ENCODE measurements at regions of chr1 and their contacts with region 1.

Region 1: DNA sequence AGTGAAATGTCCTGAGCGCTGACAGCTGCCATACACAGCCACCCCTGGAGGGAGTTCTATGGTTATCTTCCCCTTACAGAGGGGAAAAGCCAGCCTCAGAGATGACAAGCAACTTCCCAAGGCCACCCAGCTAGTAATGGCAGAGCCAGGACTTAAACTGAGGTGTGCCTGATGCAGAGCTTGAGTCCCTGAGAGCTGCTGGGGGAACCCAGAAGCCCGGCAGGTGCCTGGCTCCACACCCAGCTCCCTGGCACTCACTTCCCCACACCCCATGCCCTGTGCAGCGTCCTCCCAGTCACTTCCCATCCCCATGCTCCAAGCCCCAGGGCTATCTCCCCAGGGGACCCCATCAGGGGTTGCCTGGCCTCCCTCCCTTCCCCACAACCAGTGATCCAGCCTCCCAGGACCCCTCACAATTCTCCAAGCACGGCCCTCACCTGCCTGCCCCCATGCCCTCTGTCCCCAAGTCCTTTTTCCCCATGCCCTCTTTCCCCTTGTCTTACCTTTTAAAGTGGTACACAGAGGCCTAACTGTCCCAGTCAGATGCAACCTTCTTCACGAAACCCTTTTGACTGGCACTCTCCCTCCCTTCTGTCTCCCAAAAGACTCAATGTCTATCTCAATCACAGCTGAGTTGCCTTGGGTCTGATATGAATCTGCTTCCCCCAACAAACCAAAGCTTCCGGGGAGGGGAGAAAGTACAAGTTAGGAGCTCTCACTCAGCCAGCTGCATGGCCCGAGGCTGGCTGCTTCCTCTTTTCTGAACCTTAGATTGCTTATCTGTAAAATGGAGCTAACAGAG is 39.8 kb upstream of the LRP8 start:
- DNase-seq: peak; percentile 64
- ATAC-seq: peak; percentile 96
- H3K4me3 ChIP-seq: peak overlapping the region; percentile 66
- H3K27ac ChIP-seq: peak overlapping the region; percentile 53
- H3K4me1 ChIP-seq: peaks cover 8% of the 10 kb centered on the region
- H3K27me3 ChIP-seq: no peaks in the 10 kb centered on the region
- CTCF ChIP-seq: no peak
- EP300 ChIP-seq: no peak
- POLR2A ChIP-seq: peak; percentile 54; the same call in 1 of the 2 replicates
- RAD21 ChIP-seq: no peak

Region 2: DNA sequence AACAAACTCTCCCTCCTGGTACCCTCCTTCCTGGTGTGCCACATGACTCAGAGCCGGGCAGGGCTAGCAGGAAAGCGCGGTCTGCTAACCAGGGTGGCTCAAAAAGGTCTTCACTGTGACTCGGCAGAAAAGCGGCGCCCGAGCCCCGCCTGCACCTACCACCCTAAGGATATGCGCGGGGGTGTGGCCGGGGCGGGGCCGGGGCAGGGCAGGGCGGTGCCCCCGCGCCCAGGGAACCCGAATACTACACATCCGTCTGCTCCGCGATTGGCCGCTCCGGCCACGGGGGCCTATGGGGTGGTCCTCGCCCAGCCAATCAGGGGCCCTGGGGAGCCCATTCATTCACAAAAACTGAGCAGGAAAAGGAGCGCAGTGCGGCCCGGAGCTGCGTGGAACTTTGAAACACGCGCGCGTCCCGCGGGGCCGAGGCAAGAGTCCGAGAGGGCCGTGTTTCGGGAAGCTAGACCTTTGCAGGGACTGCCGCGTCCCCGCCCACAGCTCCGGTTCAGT is 41.6 kb before region 1 on chr1:
- CTCF ChIA-PET with region 1: interaction called, 5 read pairs
- POLR2A ChIA-PET with region 1: interaction called, 10 read pairs
- RAD21 ChIA-PET with region 1: interaction called, 12 read pairs
- SMC1A ChIA-PET with region 1: interaction called, 4 read pairs
- in situ Hi-C with region 1: no loop called
- intact Hi-C with region 1: no loop called
- DNase-seq: peak; percentile 73
- ATAC-seq: peak; percentile 95
- H3K4me3 ChIP-seq: peak overlapping the region; percentile 100
- H3K27ac ChIP-seq: peak overlapping the region; percentile 79
- H3K4me1 ChIP-seq: peaks cover 13% of the 10 kb centered on the region
- H3K27me3 ChIP-seq: no peaks in the 10 kb centered on the region
- CTCF ChIP-seq: no peak; a peak in 1 of 6 replicates
- EP300 ChIP-seq: no peak
- POLR2A ChIP-seq: peak; percentile 83
- RAD21 ChIP-seq: no peak

Region 3: DNA sequence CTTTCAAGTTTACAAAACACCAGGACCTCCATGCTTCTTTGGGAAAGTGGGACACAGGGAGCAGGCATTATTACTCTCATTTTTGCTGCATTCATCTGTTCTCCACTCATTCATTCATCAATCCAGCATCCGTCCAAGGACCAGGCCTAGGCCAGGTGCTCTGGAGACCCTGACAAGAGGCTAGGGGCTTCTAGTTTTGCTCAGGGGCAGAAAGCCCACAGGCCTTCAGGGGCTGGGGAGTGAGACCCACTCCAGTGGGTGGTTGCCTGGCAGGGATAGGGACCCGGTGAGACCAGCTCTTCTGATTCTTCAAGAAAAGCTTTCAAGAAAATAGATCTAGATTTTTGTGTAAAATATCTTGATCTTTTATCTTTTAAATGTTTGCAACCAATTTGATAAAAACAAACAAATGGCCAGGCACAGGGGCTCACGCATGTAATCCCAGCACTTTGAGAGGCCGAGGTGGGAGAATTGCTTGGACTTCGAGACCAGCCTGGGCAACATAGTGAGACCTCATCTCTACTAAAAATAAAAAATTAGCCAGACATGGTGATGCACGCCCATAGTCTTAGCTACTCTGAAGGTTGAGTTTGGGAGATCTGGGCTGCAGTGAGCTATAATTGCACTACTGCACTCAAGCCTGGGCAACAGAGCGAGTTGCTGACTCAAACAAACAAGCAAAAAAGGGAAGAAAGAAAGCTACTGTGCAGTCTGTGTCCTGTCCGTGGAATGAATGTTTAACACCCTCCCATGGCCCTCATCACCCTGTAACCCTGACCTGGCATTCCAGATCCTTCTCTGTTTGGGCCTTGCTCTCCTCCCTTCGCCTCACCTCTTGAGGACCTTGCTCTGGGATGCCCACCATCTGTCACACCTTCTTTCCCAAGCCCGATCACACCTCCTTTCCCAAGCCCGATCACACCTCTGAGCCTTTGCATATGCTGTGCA is 22.5 kb before region 1 on chr1:
- CTCF ChIA-PET with region 1: interaction called, 7 read pairs
- POLR2A ChIA-PET with region 1: interaction called, 4 read pairs
- RAD21 ChIA-PET with region 1: interaction called, 10 read pairs
- SMC1A ChIA-PET with region 1: no interaction called
- in situ Hi-C with region 1: no loop called
- intact Hi-C with region 1: no loop called
- DNase-seq: peak; percentile 56
- ATAC-seq: peak; percentile 96
- H3K4me3 ChIP-seq: no peak overlapping the region
- H3K27ac ChIP-seq: peak overlapping the region; percentile 33
- H3K4me1 ChIP-seq: peaks cover 17% of the 10 kb centered on the region
- H3K27me3 ChIP-seq: no peaks in the 10 kb centered on the region
- CTCF ChIP-seq: no peak
- EP300 ChIP-seq: peak in 1 of 2 experiments; percentile 30; a peak in 1 of 4 replicates
- POLR2A ChIP-seq: no peak
- RAD21 ChIP-seq: no peak

Region 4: GRCh38 chr1:53508991-53509666 is 141.4 kb after region 1 on chr1:
- CTCF ChIA-PET with region 1: no interaction called
- POLR2A ChIA-PET with region 1: no interaction called
- RAD21 ChIA-PET with region 1: no interaction called
- SMC1A ChIA-PET with region 1: no interaction called
- in situ Hi-C with region 1: no loop called
- intact Hi-C with region 1: no loop called
- DNase-seq: no peak
- ATAC-seq: peak; percentile 70
- H3K4me3 ChIP-seq: no peak overlapping the region
- H3K27ac ChIP-seq: no peak overlapping the region
- H3K4me1 ChIP-seq: no peaks in the 10 kb centered on the region
- H3K27me3 ChIP-seq: no peaks in the 10 kb centered on the region
- CTCF ChIP-seq: no peak
- EP300 ChIP-seq: no peak
- POLR2A ChIP-seq: no peak
- RAD21 ChIP-seq: no peak

Measured in GM12878 (cell line).